Mucosa of descending colon (tissue), 3 donors: ENCODE measurements at regions of chr12 and their contacts with region 1.

Region 1: GRCh38 chr12:84874125-84874824 is 38.3 kb downstream of the SLC6A15 start:
- DNase-seq: peak in 1 of 3 donors; percentile 19
- ATAC-seq: peak; percentile 64
- H3K4me3 ChIP-seq: no peak overlapping the region
- H3K4me1 ChIP-seq: no peaks in the 10 kb centered on the region
- CTCF ChIP-seq: peak; percentile 56

Region 2: GRCh38 chr12:84653482-84653881 is 220.8 kb before region 1 on chr12:
- intact Hi-C with region 1: no loop called
- DNase-seq: no peak
- ATAC-seq: no peak
- H3K4me3 ChIP-seq: no peak overlapping the region
- H3K4me1 ChIP-seq: no peaks in the 10 kb centered on the region
- CTCF ChIP-seq: no peak

Region 3: DNA sequence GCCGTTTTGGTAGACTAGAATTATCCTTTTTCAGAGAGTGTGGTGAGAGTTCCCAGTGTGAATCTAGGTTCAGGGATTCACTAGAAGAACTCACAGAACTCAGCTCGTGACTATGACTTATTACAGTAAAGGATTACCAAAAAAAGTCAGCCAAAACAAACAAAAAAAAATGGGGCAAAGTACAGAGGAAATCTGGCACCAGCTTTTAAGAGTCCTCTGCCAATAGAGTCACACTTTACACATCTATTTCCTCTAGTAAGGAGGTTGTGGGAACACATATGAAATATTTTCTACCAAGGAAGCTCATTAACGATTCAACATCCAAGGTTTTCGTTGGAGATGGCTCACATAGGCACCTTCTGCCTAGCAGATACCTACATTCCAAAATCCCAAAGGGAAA is 133.6 kb after region 1 on chr12:
- intact Hi-C with region 1: no loop called
- DNase-seq: peak in 1 of 3 donors; percentile 31
- ATAC-seq: peak; percentile 78
- H3K4me3 ChIP-seq: no peak overlapping the region
- H3K4me1 ChIP-seq: no peaks in the 10 kb centered on the region
- CTCF ChIP-seq: no peak

Region 4: GRCh38 chr12:85029456-85029855 is 155.2 kb after region 1 on chr12:
- intact Hi-C with region 1: loop called (anchors 1 to 10 kb)
- DNase-seq: no peak
- ATAC-seq: no peak
- H3K4me3 ChIP-seq: no peak overlapping the region
- H3K4me1 ChIP-seq: no peaks in the 10 kb centered on the region
- CTCF ChIP-seq: no peak

Region 5: GRCh38 chr12:85036241-85036707 is 162.0 kb after region 1 on chr12 and contains the starts of genes LRRIQ1 and TSPAN19:
- intact Hi-C with region 1: loop called in 1 of 2 experiments (anchors 10 kb)
- DNase-seq: peak; percentile 29 to 78 (median 41)
- ATAC-seq: peak; percentile 85
- H3K4me3 ChIP-seq: no peak within 1 kb of the TSS
- H3K4me1 ChIP-seq: no peaks in the 10 kb centered on the region
- CTCF ChIP-seq: no peak
- total RNA-seq, gene LRRIQ1: 0.35 TPM in 1 of 3 donors, not detected in the others
- total RNA-seq, gene TSPAN19: 1.2 TPM in 1 of 3 donors, not detected in the others